ENCODE measurements at regions of chr3 and their contacts with region 1.

Region 1: DNA sequence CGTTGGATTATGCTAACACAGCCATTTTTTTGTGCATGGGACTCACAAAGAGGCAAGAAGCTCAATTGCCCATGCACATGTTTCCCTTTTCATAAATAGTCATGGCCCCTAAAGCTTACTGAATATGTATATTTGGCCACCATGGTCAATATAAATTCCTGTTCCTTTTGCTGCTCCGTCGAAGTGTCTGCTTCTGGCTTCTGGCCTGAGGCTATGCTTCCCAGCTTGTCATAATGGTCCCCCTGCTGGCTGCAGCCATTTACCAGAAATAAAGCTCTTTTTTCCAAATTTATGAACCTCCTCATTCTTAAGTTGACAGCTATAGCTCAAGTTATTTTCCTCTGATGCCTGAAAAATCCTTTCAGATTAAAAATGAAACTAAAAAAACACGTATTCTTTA is 602.1 kb downstream of the VGLL3 start:
- DNase-seq: peak; percentile 34
- H3K4me3 Mint-ChIP-seq: peak overlapping the region; percentile 53
- H3K27ac Mint-ChIP-seq: peak overlapping the region; percentile 83
- H3K4me1 Mint-ChIP-seq: peaks cover 14% of the 10 kb centered on the region
- H3K27me3 Mint-ChIP-seq: no peaks in the 10 kb centered on the region
- CTCF ChIP-seq: peak; percentile 30

Region 2: DNA sequence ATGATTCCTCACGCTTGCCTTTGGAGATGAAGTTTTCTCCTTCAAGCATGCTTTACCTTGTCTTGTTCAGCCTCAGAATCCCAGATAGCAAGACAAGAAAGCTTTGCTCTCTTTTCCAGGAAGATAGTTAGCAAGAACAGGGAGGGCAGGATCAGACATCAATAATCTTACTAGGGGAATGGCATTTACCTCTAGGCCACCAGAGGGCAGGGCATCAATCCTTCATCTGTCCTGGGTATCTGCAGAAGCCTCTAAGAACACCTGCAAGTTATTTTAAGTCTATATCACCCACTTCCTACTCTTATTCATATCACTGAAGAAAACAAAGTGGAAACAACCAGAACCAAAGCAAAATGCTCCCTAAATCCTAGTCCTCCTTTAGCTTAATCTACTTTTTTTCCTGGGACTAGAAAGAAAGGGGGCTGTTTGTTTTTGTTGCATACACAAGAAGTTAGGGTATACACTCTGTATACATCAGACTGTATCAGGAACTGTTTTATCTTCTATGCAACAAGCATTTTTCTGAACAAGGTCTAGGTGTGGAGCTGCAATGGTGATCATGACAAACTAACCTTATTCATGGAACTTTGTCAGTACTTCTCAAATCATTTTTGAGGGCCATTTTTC is 567.6 kb before region 1 on chr3:
- CTCF ChIA-PET with region 1: no interaction called
- intact Hi-C with region 1: loop called (anchors 1 kb)
- DNase-seq: peak; percentile 51
- H3K4me3 Mint-ChIP-seq: no peak overlapping the region
- H3K27ac Mint-ChIP-seq: no peak overlapping the region
- H3K4me1 Mint-ChIP-seq: no peaks in the 10 kb centered on the region
- H3K27me3 Mint-ChIP-seq: no peaks in the 10 kb centered on the region
- CTCF ChIP-seq: peak; percentile 49

Region 3: GRCh38 chr3:86180696-86181095 is 208.1 kb before region 1 on chr3:
- CTCF ChIA-PET with region 1: interaction called, 4 read pairs
- intact Hi-C with region 1: loop called (anchors 2 kb)
- DNase-seq: peak; percentile 39
- H3K4me3 Mint-ChIP-seq: no peak overlapping the region
- H3K27ac Mint-ChIP-seq: no peak overlapping the region
- H3K4me1 Mint-ChIP-seq: no peaks in the 10 kb centered on the region
- H3K27me3 Mint-ChIP-seq: no peaks in the 10 kb centered on the region
- CTCF ChIP-seq: no peak

Region 4: GRCh38 chr3:86303935-86304334 is 84.9 kb before region 1 on chr3:
- CTCF ChIA-PET with region 1: no interaction called
- intact Hi-C with region 1: no loop called
- DNase-seq: no peak
- H3K4me3 Mint-ChIP-seq: no peak overlapping the region
- H3K27ac Mint-ChIP-seq: no peak overlapping the region
- H3K4me1 Mint-ChIP-seq: no peaks in the 10 kb centered on the region
- H3K27me3 Mint-ChIP-seq: no peaks in the 10 kb centered on the region
- CTCF ChIP-seq: no peak